A549 (cell line): ENCODE measurements at regions of chr1 and their contacts with region 1.

Region 1: DNA sequence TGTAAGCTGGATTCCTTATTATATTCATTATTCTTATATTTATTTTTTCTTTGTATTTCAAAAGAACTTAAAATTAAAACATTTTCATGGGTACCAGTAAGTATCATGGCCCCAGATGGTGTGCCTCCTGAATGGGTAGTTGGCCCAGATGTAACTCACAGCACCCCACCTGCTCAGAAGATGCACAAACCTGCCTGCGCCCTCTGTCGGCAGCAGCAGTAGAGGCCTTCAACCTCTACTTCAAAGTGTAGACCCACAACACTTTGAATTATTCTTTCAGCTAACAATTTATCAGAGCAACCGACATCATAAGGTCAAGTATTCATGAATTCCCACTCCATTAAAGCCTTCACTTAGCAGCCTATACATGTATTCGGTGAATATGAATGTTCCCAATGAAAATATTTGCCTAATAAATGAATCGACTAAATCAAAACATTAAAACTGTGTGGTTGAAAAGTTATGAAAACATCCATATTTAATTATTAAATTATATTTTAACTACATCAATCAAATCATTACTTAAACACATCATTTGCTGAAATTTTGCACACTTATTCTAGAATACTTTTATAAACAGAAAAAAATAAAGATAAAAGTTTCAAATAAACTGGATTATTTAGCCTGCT is 25.4 kb downstream of the PIGM start:
- DNase-seq: peak; percentile 80 to 87
- ATAC-seq: peak; percentile 93 to 96
- H3K4me3 ChIP-seq: no peak overlapping the region
- H3K27ac ChIP-seq: no peak overlapping the region
- H3K4me1 ChIP-seq: no peaks in the 10 kb centered on the region
- CTCF ChIP-seq: peak; percentile 94
- EP300 ChIP-seq: no peak
- POLR2A ChIP-seq: no peak
- RAD21 ChIP-seq: peak; percentile 71 to 78

Region 2: DNA sequence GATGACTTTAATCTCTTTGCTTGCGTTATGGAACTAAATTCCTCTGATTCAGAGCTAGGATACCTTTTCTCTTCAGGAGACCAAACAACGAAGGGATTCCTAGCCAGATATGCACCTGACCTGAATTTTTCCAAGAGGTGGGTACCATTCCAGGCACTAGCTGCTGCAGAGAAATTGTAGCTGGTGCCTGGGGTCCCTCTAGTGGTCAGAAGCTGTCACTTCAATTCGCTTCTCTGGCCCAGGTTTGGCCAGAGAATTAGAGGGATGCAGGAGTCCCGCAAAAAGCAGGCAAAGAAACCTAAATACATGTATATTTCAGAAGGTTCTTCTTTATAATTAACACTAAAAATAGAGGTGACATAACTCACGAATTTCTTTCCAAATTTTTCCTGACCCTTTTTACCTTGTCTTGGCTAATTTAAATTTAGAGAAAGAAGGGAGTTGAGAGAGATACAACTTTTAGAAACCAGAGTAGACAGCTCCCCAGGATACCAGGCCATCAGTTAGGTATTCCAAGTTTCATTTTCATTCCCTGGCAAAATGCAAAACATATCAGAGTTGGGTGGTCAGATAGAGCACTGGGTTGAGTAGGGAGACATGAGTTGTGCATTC is 792.2 kb before region 1 on chr1:
- CTCF ChIA-PET with region 1: interaction called, 12 read pairs
- POLR2A ChIA-PET with region 1: no interaction called
- DNase-seq: peak; percentile 40 to 59
- ATAC-seq: peak; percentile 67 to 90; a peak in 5 of 6 replicates
- H3K4me3 ChIP-seq: no peak overlapping the region
- H3K27ac ChIP-seq: no peak overlapping the region
- H3K4me1 ChIP-seq: peaks cover 13% of the 10 kb centered on the region; the same call in 1 of the 3 replicates
- CTCF ChIP-seq: peak; percentile 77
- EP300 ChIP-seq: no peak
- POLR2A ChIP-seq: no peak
- RAD21 ChIP-seq: peak; percentile 67 to 71

Region 3: GRCh38 chr1:159881930-159882839 is 124.2 kb before region 1 on chr1:
- CTCF ChIA-PET with region 1: interaction called, 202 read pairs
- POLR2A ChIA-PET with region 1: no interaction called
- DNase-seq: peak; percentile 90 to 95
- ATAC-seq: peak; percentile 94
- H3K4me3 ChIP-seq: no peak overlapping the region
- H3K27ac ChIP-seq: peak overlapping the region; percentile 53 to 70
- H3K4me1 ChIP-seq: peaks cover 39% of the 10 kb centered on the region
- CTCF ChIP-seq: no peak
- EP300 ChIP-seq: 0 out of 5 replicates have a peak, but pooled peaks of 1 of the 2 experiments have one; percentile 17
- POLR2A ChIP-seq: no peak
- RAD21 ChIP-seq: 0 out of 5 replicates have a peak, but pooled peaks of 1 of the 2 experiments have one; percentile 2

Region 4: GRCh38 chr1:159945483-159946241 is 60.8 kb before region 1 on chr1 and contains the start of gene IGSF9:
- CTCF ChIA-PET with region 1: interaction called, 665 read pairs
- POLR2A ChIA-PET with region 1: interaction called, 5 read pairs
- DNase-seq: peak; percentile 61 to 71
- ATAC-seq: peak; percentile 82 to 95
- H3K4me3 ChIP-seq: peak within 1 kb of the TSS; percentile 41
- H3K27ac ChIP-seq: peak within 1 kb of the TSS; percentile 40 to 83; a peak in 5 of 6 replicates
- H3K4me1 ChIP-seq: peaks cover 5% of the 10 kb centered on the region; the same call in 1 of the 3 replicates
- CTCF ChIP-seq: peak; percentile 60
- EP300 ChIP-seq: no peak
- POLR2A ChIP-seq: no peak
- RAD21 ChIP-seq: peak; percentile 56 to 70
- polyA plus RNA-seq, gene IGSF9: 0.05 and 0.06 TPM in 2 replicates

Region 5: DNA sequence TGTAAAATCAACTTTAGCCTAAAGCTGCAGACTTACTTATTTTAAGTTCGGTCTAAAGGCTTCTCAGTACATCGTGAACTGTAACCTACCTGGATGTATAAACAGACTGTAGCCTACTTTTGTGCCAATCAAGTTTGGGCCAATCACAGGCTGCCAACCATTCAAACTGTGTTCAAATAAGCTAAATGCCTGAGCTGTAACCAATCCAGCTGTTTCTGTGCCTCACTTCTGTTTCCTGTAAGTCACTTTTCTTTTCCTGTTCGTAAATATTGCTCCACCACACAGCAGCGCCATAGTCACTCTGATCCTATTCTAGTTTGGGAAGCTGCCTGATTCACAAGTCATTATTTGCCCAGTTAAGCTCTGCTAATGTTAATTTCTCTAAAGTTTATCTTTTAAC is 14.9 kb before region 1 on chr1:
- CTCF ChIA-PET with region 1: interaction called, 38 read pairs
- POLR2A ChIA-PET with region 1: no interaction called
- DNase-seq: peak in 1 of 2 experiments; percentile 11
- ATAC-seq: peak in 1 of 2 experiments; percentile 55; a peak in 3 of 6 replicates
- H3K4me3 ChIP-seq: no peak overlapping the region
- H3K27ac ChIP-seq: no peak overlapping the region
- H3K4me1 ChIP-seq: peaks cover 6% of the 10 kb centered on the region; the same call in 2 of the 3 replicates
- CTCF ChIP-seq: no peak
- EP300 ChIP-seq: no peak
- POLR2A ChIP-seq: no peak
- RAD21 ChIP-seq: no peak

Region 6: GRCh38 chr1:160046494-160047110 is 40.2 kb after region 1 on chr1:
- CTCF ChIA-PET with region 1: interaction called, 16 read pairs
- POLR2A ChIA-PET with region 1: no interaction called
- DNase-seq: peak; percentile 26 to 75
- ATAC-seq: peak; percentile 73 to 91
- H3K4me3 ChIP-seq: 0 out of 3 replicates have a peak overlapping the region, but pooled peaks have one; percentile 17
- H3K27ac ChIP-seq: no peak overlapping the region
- H3K4me1 ChIP-seq: peaks cover 8% of the 10 kb centered on the region; the same call in 2 of the 3 replicates
- CTCF ChIP-seq: peak; percentile 72
- EP300 ChIP-seq: no peak
- POLR2A ChIP-seq: no peak
- RAD21 ChIP-seq: peak; percentile 67 to 71